Sigmoid colon (tissue), 7 donors: ENCODE measurements at regions of chr2 and their contacts with region 1.

Region 1: GRCh38 chr2:12317814-12318426 is 398.8 kb upstream of the TRIB2 start:
- DNase-seq: no peak
- H3K4me3 ChIP-seq: no peak overlapping the region
- H3K27ac ChIP-seq: peak overlapping the region; percentile 35 to 78 (median 70)
- H3K4me1 ChIP-seq: peaks cover 0 to 57% (median 51%) of the 10 kb centered on the region in 4 donors
- H3K27me3 ChIP-seq: no peaks in the 10 kb centered on the region
- CTCF ChIP-seq: no peak
- EP300 ChIP-seq: peak in 1 of 4 donors; percentile 11
- POLR2A ChIP-seq: no peak

Region 2: GRCh38 chr2:12429779-12430406 is 112.0 kb after region 1 on chr2:
- intact Hi-C with region 1: loop called (anchors 5 kb)
- DNase-seq: no peak
- H3K4me3 ChIP-seq: no peak overlapping the region
- H3K27ac ChIP-seq: peak overlapping the region in 3 of 4 donors; percentile 63 to 77 (median 76)
- H3K4me1 ChIP-seq: peaks cover 3 to 49% (median 36%) of the 10 kb centered on the region in 4 donors
- H3K27me3 ChIP-seq: no peaks in the 10 kb centered on the region
- CTCF ChIP-seq: no peak
- EP300 ChIP-seq: no peak
- POLR2A ChIP-seq: no peak

Region 3: DNA sequence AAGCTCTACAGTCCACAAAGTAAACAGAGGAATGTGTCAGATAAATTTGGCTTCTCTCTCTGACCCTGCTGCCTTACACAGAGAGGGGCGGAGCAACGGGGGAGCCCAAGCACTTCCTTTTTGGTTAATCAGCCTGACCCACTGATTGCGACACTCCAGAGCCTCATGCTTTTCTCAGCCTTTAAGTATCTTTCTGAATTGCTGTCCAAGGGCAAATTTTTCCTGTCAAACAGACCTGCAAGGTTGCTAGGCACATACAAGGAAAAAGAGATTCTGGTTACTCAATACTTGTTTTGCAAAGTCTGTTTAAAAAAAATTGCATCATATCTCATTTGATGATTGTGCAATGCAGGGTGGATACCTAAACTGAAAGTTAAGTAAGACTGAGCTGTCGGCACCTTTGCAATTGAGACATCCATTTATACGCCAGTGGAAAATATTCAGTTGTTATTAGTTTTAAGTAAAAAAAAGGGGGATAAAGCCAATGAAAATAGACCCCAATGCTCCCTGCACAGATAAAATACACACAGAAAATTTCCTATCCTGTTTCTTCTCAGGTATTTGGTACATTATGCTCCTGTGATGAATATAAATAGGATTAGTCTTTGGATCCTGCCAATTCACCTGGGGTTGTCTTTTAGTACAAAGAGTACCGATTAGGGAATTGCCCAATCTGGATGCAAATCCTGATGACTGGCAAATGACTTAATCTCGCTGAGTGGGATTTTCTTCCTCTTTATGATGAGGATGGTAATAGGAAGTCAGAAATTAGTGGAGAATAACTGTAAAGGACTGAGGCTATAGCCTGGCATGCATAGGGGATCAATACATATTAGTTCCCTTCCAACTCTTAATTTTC is 138.6 kb after region 1 on chr2:
- intact Hi-C with region 1: loop called (anchors 10 kb)
- DNase-seq: peak; percentile 97
- H3K4me3 ChIP-seq: no peak overlapping the region
- H3K27ac ChIP-seq: peak overlapping the region; percentile 56 to 68 (median 62)
- H3K4me1 ChIP-seq: peaks cover 0 to 36% (median 19%) of the 10 kb centered on the region in 4 donors
- H3K27me3 ChIP-seq: no peaks in the 10 kb centered on the region
- CTCF ChIP-seq: no peak
- EP300 ChIP-seq: peak; percentile 15 to 78 (median 47)
- POLR2A ChIP-seq: no peak